Activated naive CD4-positive, alpha-beta T cell treated with anti-CD3 and anti-CD28 coated beads for 36 hours (primary cell): ENCODE measurements at regions of chr2 and their contacts with region 1.

Region 1: GRCh38 chr2:160301420-160301819 is 101.3 kb upstream of the ITGB6 start:
- DNase-seq: peak; percentile 73
- H3K4me3 Mint-ChIP-seq: no peak overlapping the region
- H3K27ac Mint-ChIP-seq: peak overlapping the region; percentile 76
- H3K4me1 Mint-ChIP-seq: peaks cover 63% of the 10 kb centered on the region
- H3K27me3 Mint-ChIP-seq: no peaks in the 10 kb centered on the region

Region 2: DNA sequence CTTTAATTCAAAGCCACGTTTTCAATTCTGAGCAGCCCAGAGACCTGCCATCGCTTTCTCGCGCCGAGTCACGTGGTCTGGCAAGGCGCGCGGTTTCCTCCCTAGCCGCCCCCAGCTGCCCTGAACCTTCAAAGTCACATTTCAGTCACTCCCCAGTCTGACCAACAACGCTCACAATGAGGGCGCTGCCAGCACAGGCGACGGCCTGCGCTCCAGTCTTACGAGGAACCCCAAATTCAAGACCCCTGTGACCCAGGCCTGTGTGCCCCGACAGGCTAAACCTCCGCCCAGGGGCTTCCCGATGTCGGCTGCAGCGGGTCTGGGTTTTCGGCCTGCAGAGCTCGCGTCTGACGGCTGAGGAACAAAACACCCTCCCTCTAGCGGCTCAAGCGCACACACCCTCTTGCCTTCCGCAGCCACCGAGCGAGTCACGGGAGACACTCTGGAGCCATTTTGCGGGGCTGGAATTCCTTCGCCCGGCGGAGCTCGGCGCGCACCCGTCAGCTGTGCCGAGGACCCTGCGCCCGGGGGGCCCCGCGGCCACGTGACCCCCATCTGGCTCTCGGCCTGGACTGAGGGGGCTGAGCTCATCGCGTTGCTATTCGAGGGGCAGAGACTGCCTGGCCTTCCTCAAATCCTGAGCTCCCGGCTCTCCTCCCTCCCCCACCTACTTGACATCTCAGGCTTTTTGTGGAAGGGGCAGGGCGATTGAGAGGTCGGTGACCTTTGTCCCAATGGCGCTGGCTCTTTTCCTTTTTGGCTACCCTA is 31.4 kb before region 1 on chr2:
- CTCF ChIA-PET with region 1: interaction called, 4 read pairs
- intact Hi-C with region 1: loop called (anchors 1 kb)
- DNase-seq: peak; percentile 64
- H3K4me3 Mint-ChIP-seq: peak overlapping the region; percentile 65
- H3K27ac Mint-ChIP-seq: peak overlapping the region; percentile 53
- H3K4me1 Mint-ChIP-seq: peaks cover 39% of the 10 kb centered on the region
- H3K27me3 Mint-ChIP-seq: no peaks in the 10 kb centered on the region

Region 3: GRCh38 chr2:160345071-160345764 is 43.8 kb after region 1 on chr2:
- CTCF ChIA-PET with region 1: no interaction called
- intact Hi-C with region 1: loop called (anchors 1 kb)
- DNase-seq: no peak
- H3K4me3 Mint-ChIP-seq: peak overlapping the region; percentile 51
- H3K27ac Mint-ChIP-seq: peak overlapping the region; percentile 66
- H3K4me1 Mint-ChIP-seq: peaks cover 69% of the 10 kb centered on the region
- H3K27me3 Mint-ChIP-seq: no peaks in the 10 kb centered on the region

Region 4: GRCh38 chr2:160472839-160473251 is 171.4 kb after region 1 on chr2:
- CTCF ChIA-PET with region 1: no interaction called
- intact Hi-C with region 1: loop called (anchors 2 kb)
- DNase-seq: no peak
- H3K4me3 Mint-ChIP-seq: no peak overlapping the region
- H3K27ac Mint-ChIP-seq: no peak overlapping the region
- H3K4me1 Mint-ChIP-seq: peaks cover 69% of the 10 kb centered on the region
- H3K27me3 Mint-ChIP-seq: no peaks in the 10 kb centered on the region